ENCODE measurements at regions of chr3 and their contacts with region 1.

Region 1: GRCh38 chr3:52291508-52292181 is 4.0 kb downstream of the GLYCTK start:
- DNase-seq: peak; percentile 57
- ATAC-seq: peak; percentile 22
- H3K4me3 Mint-ChIP-seq: peak overlapping the region; percentile 56
- H3K27ac Mint-ChIP-seq: peak overlapping the region; percentile 43
- H3K4me1 Mint-ChIP-seq: peaks cover 30% of the 10 kb centered on the region
- H3K27me3 Mint-ChIP-seq: no peaks in the 10 kb centered on the region
- CTCF ChIP-seq: no peak

Region 2: DNA sequence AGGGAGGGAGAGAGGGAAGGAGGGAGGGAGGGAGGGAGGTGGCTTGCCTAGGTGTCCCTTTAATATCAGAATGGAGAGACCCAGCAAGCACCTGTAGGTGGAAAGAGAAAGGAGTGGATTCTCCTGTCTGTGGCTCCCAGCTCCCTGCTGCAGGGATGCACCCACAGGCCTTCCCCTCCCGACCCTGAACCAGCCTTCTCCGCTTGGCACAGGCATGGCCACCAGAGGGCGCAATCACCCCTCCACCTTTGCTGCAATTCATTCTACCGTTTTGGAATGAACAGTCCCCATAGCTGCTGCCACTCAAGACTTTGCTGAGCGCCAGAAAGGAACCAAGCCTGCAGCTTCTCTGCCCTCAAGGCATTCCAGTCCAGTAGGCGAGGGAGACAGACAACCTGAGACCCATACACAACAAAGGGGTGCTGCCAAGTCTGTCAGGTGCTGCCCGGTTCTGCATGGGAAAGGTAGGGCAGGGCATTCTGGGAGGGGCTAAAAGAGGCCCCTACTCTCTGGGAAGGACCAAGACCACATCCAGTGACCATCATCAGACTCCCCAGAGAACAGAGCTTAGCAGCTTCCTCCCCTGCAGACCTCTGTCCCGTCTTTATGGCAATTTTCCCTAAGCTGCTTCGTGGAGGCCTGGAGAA is 71.1 kb before region 1 on chr3:
- CTCF ChIA-PET with region 1: interaction called, 30 read pairs
- POLR2A ChIA-PET with region 1: interaction called, 62 read pairs
- intact Hi-C with region 1: loop called (anchors 1 kb)
- DNase-seq: peak; percentile 80
- ATAC-seq: peak; percentile 59
- H3K4me3 Mint-ChIP-seq: peak overlapping the region; percentile 50
- H3K27ac Mint-ChIP-seq: peak overlapping the region; percentile 53
- H3K4me1 Mint-ChIP-seq: peaks cover 88% of the 10 kb centered on the region
- H3K27me3 Mint-ChIP-seq: no peaks in the 10 kb centered on the region
- CTCF ChIP-seq: no peak

Region 3: GRCh38 chr3:52231502-52232293 is 59.9 kb before region 1 on chr3:
- CTCF ChIA-PET with region 1: interaction called, 19 read pairs
- POLR2A ChIA-PET with region 1: interaction called, 62 read pairs
- intact Hi-C with region 1: loop called (anchors 1 kb)
- DNase-seq: peak; percentile 89
- ATAC-seq: peak; percentile 90
- H3K4me3 Mint-ChIP-seq: no peak overlapping the region
- H3K27ac Mint-ChIP-seq: no peak overlapping the region
- H3K4me1 Mint-ChIP-seq: peaks cover 50% of the 10 kb centered on the region
- H3K27me3 Mint-ChIP-seq: no peaks in the 10 kb centered on the region
- CTCF ChIP-seq: peak; percentile 41

Region 4: DNA sequence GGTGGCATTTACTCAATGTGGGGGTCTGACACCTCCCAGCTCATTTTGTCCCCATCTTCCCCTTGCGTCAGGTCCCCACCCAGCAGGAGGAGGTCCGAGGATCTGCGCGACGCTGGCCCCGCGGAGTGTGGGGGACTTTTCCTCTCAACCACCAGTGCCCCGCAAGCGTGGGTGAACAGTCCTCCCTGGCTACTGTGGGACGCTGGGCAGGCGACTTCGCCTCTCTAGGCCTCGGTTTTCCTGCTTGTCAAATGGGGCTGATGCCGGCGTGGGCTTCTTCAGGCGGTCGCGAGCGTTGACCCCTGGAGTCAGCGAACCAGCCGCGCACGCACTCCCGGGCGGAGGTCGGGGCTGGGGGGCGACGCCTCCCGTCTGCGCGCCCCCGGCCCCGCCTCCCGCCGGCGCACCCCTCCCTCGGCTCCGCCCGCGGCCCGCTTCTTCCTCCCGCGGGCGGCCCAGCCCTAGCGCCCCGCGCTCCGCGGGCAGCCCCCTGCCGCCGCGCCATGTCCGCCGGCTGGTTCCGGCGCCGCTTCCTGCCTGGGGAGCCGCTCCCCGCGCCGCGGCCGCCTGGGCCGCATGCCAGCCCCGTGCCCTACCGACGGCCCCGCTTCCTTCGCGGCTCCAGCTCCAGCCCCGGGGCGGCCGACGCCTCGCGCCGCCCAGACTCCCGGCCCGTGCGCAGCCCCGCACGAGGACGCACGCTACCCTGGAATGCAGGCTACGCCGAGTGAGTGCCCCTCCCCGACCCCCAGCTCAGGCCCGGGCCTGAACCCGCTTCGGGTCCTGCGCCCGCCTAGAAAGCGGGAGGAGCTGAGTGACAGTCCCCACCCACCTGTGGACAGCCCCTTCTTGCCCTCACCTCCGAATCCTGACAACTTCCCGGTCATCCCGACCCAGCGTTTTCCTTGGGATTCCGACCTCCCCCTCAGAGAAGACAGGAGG is 46.1 kb before region 1 on chr3 and contains the start of gene PPM1M:
- CTCF ChIA-PET with region 1: interaction called, 4 read pairs
- POLR2A ChIA-PET with region 1: interaction called, 22 read pairs
- intact Hi-C with region 1: no loop called
- DNase-seq: peak; percentile 61
- ATAC-seq: peak; percentile 44
- H3K4me3 Mint-ChIP-seq: peak within 1 kb of the TSS; percentile 84
- H3K27ac Mint-ChIP-seq: peak within 1 kb of the TSS; percentile 95
- H3K4me1 Mint-ChIP-seq: peaks cover 61% of the 10 kb centered on the region
- H3K27me3 Mint-ChIP-seq: no peaks in the 10 kb centered on the region
- CTCF ChIP-seq: no peak
- total RNA-seq, gene PPM1M: 44.4 and 44.6 TPM in 2 replicates

Region 5: DNA sequence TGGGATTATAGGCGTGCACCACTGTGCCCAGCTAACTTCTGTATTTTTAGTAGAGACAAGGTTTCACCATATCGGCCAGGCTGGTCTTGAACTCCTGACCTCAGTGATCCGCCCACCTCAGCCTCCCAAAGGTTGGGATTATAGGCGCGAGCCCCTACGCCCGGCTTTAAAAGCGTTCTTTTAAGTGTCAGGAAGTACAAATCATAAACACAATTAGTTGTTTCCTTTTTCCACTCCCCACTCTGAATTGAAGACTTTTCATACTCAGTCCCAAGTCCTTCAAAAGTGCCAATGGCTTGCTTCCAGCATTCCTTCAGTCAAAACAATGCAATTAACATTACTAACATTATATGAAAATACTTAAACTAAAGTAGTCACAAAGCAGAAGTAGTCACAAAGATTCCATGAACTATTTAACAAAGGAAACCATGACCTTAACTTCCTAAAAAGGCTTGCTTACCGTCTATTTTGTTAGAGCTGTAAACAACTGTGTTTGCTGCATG is 21.3 kb before region 1 on chr3:
- CTCF ChIA-PET with region 1: interaction called, 4 read pairs
- POLR2A ChIA-PET with region 1: interaction called, 11 read pairs
- intact Hi-C with region 1: no loop called
- DNase-seq: no peak
- ATAC-seq: no peak
- H3K4me3 Mint-ChIP-seq: peak overlapping the region; percentile 41
- H3K27ac Mint-ChIP-seq: peak overlapping the region; percentile 76
- H3K4me1 Mint-ChIP-seq: peaks cover 79% of the 10 kb centered on the region
- H3K27me3 Mint-ChIP-seq: no peaks in the 10 kb centered on the region
- CTCF ChIP-seq: no peak

Region 6: GRCh38 chr3:52313774-52314188 is 22.1 kb after region 1 on chr3:
- CTCF ChIA-PET with region 1: interaction called, 4 read pairs
- POLR2A ChIA-PET with region 1: interaction called, 8 read pairs
- intact Hi-C with region 1: loop called (anchors 1 kb)
- DNase-seq: peak; percentile 55
- ATAC-seq: peak; percentile 77
- H3K4me3 Mint-ChIP-seq: peak overlapping the region; percentile 55
- H3K27ac Mint-ChIP-seq: peak overlapping the region; percentile 87
- H3K4me1 Mint-ChIP-seq: peaks cover 78% of the 10 kb centered on the region
- H3K27me3 Mint-ChIP-seq: no peaks in the 10 kb centered on the region
- CTCF ChIP-seq: no peak

Region 7: GRCh38 chr3:52444860-52445793 is 153.5 kb after region 1 on chr3 and contains the start of gene SEMA3G:
- CTCF ChIA-PET with region 1: interaction called, 5 read pairs
- POLR2A ChIA-PET with region 1: no interaction called
- intact Hi-C with region 1: loop called (anchors 1 kb)
- DNase-seq: peak; percentile 62
- ATAC-seq: peak; percentile 97
- H3K4me3 Mint-ChIP-seq: no peak within 1 kb of the TSS
- H3K27ac Mint-ChIP-seq: no peak within 1 kb of the TSS
- H3K4me1 Mint-ChIP-seq: peaks cover 9% of the 10 kb centered on the region
- H3K27me3 Mint-ChIP-seq: peaks cover 3% of the 10 kb centered on the region
- CTCF ChIP-seq: no peak
- total RNA-seq, gene SEMA3G: not detected in 2 replicates